Psoas muscle (tissue), 8 donors: ENCODE measurements at regions of chr3 and their contacts with region 1.

Region 1: DNA sequence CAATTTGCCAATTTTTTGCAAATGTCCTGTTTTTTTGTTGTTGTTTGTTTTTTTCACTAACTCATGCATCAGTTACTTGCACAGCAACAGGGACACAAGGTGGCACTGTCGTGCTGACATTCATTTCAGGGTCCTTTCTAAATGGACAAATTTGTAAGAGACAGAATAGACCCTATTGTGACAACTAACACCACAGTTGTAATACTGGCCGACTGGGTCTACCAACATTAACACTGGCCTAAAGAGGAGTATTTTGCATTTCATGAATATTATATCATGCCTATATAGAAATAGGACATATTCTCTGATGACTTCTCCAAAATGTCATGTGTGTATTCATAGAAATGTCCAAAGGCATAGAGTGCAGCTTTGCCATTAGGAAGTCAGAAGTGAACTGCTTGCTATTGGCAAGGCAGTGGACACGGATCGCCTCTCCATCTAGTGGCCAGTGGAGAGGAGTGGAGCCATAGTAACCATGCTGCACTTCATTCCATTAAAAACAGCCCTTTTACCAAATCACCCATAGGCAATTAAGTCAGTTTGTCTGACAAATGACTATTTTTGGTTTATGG is 54.8 kb downstream of the ZBTB20 start:
- DNase-seq: peak; percentile 59 to 76
- ATAC-seq: peak; percentile 94 to 97 (median 96)
- H3K4me3 ChIP-seq: no peak overlapping the region
- H3K27ac ChIP-seq: peak overlapping the region; percentile 47
- H3K4me1 ChIP-seq: peaks cover 83% of the 10 kb centered on the region
- H3K27me3 ChIP-seq: no peaks in the 10 kb centered on the region
- CTCF ChIP-seq: peak; percentile 78

Region 2: DNA sequence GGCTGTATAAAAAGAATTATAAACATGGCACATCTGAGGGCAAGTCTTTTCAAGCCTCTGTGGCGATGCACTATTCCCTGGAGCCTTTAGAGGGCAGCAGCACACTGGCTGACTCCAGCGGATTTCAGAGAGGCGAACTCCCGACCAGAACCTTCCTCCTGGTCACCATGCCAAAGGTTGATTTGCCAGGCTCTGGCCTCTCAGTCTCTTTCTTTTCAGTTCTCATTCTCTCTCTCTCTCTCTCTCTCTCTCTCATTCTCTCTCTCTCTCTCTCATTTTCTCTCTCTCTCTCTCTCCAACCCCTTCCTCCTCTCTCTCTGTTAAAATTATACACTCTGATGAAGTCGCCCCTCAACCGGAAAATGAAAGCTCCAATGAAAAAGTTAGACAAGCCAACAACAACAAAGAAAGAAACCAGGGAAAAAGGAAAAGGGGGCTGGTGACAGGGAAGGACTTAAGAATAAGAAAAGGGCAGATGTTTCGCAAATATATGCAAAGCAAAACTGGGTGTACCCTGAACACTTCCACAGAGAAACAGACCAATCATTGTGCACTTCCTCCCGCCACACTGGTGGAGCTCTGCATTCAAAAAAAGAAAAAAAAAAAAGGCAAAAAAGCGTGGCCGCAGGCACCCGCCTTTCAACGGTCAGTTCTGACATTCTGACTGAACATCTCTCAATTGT is 708.3 kb before region 1 on chr3:
- intact Hi-C with region 1: loop called (anchors 5 to 10 kb)
- DNase-seq: peak; percentile 78 to 88
- ATAC-seq: peak; percentile 92 to 94 (median 94)
- H3K4me3 ChIP-seq: peak overlapping the region; percentile 56
- H3K27ac ChIP-seq: peak overlapping the region; percentile 51
- H3K4me1 ChIP-seq: peaks cover 46% of the 10 kb centered on the region
- H3K27me3 ChIP-seq: no peaks in the 10 kb centered on the region
- CTCF ChIP-seq: peak; percentile 94

Region 3: GRCh38 chr3:114827495-114827894 is 264.8 kb before region 1 on chr3:
- intact Hi-C with region 1: loop called (anchors 2 to 5 kb)
- DNase-seq: no peak
- ATAC-seq: peak in 3 of 4 donors; percentile 74 to 83 (median 76)
- H3K4me3 ChIP-seq: no peak overlapping the region
- H3K27ac ChIP-seq: no peak overlapping the region
- H3K4me1 ChIP-seq: no peaks in the 10 kb centered on the region
- H3K27me3 ChIP-seq: no peaks in the 10 kb centered on the region
- CTCF ChIP-seq: peak; percentile 62

Region 4: DNA sequence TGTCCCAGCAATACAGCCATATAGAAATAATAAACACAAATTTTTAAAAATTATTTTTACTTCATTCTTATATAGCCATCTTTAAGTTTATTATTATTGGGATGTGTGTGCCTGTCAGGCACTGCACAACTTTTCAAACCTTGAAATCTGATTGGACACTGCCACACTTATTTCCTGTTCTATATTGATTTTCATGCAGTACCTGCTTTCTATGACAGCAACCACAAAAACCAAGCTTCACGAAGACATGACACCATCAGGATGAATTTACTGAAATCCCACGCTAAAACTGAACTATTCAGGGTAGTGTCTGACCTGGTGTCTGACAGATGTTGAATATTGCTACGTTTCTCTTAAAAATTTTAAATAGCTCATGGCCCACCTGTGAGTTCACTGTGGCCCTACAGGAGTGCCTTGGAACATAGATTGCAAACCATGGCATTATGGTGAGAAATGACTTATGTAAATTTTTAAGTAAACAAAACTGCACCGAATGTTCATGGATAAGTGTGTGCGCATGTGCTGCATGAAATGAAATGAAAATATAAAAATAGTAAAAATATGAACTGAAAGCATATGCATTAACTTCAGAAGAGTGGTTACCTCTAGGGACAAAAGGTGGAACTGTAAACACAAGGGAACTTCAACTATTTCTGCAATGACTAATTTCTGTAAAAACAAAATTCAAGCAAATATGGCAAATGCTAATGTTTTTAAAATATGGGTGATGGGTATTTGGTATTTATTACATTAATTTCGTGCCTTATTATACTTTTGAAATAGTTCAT is 97.6 kb before region 1 on chr3:
- intact Hi-C with region 1: no loop called
- DNase-seq: no peak
- ATAC-seq: no peak
- H3K4me3 ChIP-seq: no peak overlapping the region
- H3K27ac ChIP-seq: no peak overlapping the region
- H3K4me1 ChIP-seq: no peaks in the 10 kb centered on the region
- H3K27me3 ChIP-seq: no peaks in the 10 kb centered on the region
- CTCF ChIP-seq: no peak

Region 5: DNA sequence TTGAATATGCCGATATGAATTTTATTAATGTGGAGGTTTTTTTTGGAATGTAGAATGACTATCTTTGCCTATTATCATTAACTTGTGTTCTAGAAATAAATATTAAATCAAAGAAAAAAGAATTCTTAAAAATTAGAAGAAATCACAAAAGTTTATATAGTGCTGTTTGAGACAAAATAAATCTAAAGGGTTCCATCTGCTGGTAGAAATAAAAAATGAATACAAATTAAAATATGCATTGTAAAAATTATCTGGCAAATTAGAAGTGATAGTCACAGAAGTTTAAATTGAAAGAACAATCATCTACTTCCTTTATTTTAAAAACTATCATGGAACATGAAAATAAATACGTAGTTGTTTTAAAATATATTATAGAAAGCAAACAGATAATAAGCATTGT is 77.5 kb after region 1 on chr3:
- intact Hi-C with region 1: loop called in 1 of 2 experiments (anchors 2 kb)
- DNase-seq: no peak
- ATAC-seq: no peak
- H3K4me3 ChIP-seq: no peak overlapping the region
- H3K27ac ChIP-seq: no peak overlapping the region
- H3K4me1 ChIP-seq: no peaks in the 10 kb centered on the region
- H3K27me3 ChIP-seq: no peaks in the 10 kb centered on the region
- CTCF ChIP-seq: peak; percentile 52